ENCODE measurements at regions of chr12 and their contacts with region 1.

Region 1: DNA sequence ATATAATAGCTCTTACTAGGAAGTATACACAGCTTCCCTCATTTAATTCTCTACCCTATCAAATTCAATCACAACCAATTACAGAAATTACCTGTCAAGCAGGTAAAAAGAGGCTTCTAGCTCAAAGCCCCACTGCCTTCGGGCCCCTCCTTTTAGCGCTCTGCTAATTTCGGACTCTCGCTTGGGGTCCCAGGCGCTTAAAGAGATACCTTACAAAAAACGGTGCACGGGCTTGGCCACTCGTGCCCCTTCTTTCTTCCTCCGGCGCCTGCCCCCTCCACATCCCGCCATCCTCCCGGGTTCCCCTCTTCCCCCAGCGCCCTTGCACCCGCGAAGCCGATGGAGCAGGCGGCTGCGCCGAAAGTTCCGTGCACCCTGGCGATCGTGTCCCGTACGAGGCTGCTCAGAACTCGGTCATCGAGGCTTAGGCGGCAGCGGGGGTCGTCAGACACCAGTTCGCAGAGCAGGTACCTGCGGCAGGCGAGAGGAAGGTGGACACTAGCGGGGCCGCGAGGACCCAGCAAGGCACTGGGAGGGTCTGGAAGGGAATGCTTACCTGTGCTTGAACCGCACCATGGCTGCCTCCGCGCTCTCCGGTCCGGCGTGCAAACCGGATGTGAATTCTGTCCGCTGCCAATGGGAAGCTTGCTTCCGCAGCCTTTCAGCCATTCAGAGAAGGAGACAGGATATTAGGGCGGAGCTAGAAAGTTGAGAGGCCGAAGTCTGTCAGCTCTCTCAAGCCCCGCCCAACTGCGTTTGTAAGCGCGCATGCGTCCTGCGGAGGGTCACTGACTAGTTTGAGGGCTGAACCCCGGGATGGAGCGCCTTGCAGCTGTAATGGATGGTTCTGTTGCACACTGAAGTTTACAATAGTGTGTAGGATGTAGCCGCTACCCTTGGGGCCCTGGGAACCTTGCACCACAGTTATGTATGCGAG is at the start of gene POP5:
- DNase-seq: peak; percentile 98
- ATAC-seq: peak; percentile 97
- H3K4me3 Mint-ChIP-seq: peak within 1 kb of the TSS; percentile 99
- H3K27ac Mint-ChIP-seq: peak within 1 kb of the TSS; percentile 84
- H3K4me1 Mint-ChIP-seq: peaks cover 34% of the 10 kb centered on the region
- H3K27me3 Mint-ChIP-seq: peaks cover 14% of the 10 kb centered on the region
- total RNA-seq, gene POP5: 63.1 to 65.1 TPM

Region 2: GRCh38 chr12:120437754-120438494 is 143.1 kb before region 1 on chr12 and contains the start of gene COX6A1:
- CTCF ChIA-PET with region 1: interaction called, 10 read pairs
- DNase-seq: peak; percentile 99
- ATAC-seq: peak; percentile 98
- H3K4me3 Mint-ChIP-seq: peak within 1 kb of the TSS; percentile 86
- H3K27ac Mint-ChIP-seq: peak within 1 kb of the TSS; percentile 95
- H3K4me1 Mint-ChIP-seq: peaks cover 39% of the 10 kb centered on the region
- H3K27me3 Mint-ChIP-seq: no peaks in the 10 kb centered on the region
- total RNA-seq, gene COX6A1: 329 to 408 TPM

Region 3: DNA sequence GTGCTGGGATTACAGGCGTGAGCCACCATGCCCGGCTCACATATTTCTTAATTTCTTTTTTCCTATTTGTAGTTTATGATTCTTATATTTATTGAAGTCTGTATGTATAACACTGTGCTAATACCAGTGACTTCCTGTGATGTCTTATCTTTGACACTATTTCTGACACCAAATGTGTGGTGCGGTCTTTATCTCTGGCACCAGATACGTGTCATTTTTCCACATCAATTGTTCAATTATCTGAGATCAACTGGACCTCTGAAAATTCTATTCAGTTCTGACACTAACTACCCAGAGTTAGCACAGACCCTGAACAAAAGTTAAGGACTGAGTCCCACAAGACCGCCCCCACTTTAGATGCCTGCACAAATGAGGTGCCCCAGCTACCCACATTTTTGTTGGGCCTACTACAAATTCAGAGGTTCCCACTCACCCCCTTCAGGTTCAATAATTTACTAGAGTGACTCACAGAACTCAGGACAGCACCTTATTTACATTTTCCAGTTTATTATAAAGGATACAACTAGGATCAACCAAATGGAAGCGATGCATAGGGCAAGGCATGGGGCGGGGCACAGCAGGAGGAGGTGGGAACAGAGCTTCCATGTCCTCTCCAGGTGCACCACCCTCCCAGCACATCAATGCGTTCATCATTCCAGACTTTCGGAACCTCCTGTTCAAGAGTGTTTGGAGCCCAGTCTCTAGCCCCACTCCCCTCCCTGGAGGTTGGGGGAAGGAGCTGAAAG is 99.9 kb before region 1 on chr12:
- CTCF ChIA-PET with region 1: no interaction called
- DNase-seq: no peak
- ATAC-seq: peak; percentile 51
- H3K4me3 Mint-ChIP-seq: no peak overlapping the region
- H3K27ac Mint-ChIP-seq: no peak overlapping the region
- H3K4me1 Mint-ChIP-seq: peaks cover 14% of the 10 kb centered on the region
- H3K27me3 Mint-ChIP-seq: no peaks in the 10 kb centered on the region

Region 4: DNA sequence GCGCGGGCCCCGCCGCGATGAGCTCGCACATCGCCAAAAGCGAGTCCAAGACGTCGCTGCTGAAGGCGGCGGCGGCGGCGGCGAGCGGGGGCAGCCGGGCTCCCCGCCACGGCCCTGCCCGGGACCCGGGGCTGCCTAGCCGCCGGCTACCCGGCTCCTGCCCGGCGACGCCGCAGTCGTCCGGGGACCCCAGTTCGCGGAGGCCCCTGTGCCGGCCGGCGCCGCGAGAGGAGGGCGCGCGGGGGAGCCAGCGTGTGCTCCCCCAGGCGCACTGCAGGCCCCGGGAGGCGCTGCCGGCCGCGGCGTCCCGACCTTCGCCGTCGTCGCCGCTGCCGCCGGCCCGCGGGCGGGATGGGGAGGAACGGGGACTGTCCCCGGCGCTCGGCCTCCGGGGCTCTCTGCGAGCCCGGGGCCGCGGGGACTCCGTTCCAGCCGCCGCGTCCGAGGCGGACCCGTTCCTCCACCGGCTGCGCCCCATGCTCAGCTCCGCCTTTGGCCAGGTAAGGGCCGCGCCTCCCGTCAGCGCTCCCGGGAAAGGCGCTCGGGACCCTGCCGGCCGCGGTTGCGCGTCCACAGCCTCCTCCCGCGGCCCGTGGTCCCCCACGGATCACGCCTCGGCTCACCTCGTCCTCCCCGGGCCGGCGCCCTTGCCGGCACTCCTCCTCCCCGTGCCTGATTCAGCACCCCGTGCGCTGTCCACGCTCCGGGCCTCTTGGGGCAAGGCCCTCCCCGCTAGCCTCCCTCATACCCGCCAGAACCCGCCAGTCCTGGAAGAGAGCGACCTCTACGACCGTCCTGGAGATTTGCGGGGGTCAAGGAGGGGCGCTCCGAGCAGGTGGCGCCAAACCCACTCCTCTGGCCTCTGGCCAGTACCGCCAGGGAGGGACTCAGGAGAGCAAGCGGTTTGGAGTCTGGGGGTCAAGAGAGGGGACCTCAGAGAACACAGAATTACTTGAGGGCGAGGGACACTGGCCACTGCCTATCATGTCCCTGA is 60.1 kb after region 1 on chr12:
- CTCF ChIA-PET with region 1: interaction called, 114 read pairs
- DNase-seq: peak; percentile 76
- ATAC-seq: peak; percentile 76
- H3K4me3 Mint-ChIP-seq: peak overlapping the region; percentile 45
- H3K27ac Mint-ChIP-seq: no peak overlapping the region
- H3K4me1 Mint-ChIP-seq: peaks cover 6% of the 10 kb centered on the region
- H3K27me3 Mint-ChIP-seq: peaks cover 51% of the 10 kb centered on the region

Region 5: GRCh38 chr12:120971299-120972179 is 390.5 kb after region 1 on chr12:
- CTCF ChIA-PET with region 1: interaction called, 43 read pairs
- DNase-seq: peak; percentile 62
- ATAC-seq: peak; percentile 91
- H3K4me3 Mint-ChIP-seq: no peak overlapping the region
- H3K27ac Mint-ChIP-seq: no peak overlapping the region
- H3K4me1 Mint-ChIP-seq: peaks cover 9% of the 10 kb centered on the region
- H3K27me3 Mint-ChIP-seq: no peaks in the 10 kb centered on the region

Region 6: DNA sequence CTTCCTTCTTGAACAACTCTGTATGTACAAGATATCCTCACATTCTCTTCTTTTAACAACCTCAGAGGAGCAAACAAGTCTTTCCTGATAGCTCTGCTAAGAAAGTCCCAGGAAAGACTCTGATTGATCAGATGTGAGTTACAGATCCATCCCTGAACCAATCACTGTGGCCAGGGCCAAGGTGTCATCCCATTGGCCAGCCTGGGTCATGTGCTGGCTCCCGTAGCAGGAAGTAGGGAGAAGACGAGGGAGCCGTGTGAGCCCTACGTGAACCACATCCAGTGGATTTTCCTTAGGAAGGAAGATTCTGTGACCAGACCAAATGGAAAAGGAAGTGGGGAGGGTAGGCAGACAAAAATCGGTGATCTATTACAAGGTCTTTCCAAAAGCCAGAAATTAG is 557.2 kb after region 1 on chr12:
- CTCF ChIA-PET with region 1: no interaction called
- DNase-seq: no peak
- ATAC-seq: no peak
- H3K4me3 Mint-ChIP-seq: no peak overlapping the region
- H3K27ac Mint-ChIP-seq: no peak overlapping the region
- H3K4me1 Mint-ChIP-seq: peaks cover 16% of the 10 kb centered on the region
- H3K27me3 Mint-ChIP-seq: no peaks in the 10 kb centered on the region